Endothelial cell of umbilical vein (primary cell): ENCODE measurements at regions of chr14 and their contacts with region 1.

Region 1: GRCh38 chr14:102316743-102317563 is 2.6 kb upstream of the ZNF839 start:
- DNase-seq: peak; percentile 93
- H3K4me3 ChIP-seq: peak overlapping the region; percentile 9 to 54 (median 31)
- H3K27ac ChIP-seq: no peak overlapping the region
- H3K4me1 ChIP-seq: peaks cover 25% of the 10 kb centered on the region
- H3K27me3 ChIP-seq: no peaks in the 10 kb centered on the region
- CTCF ChIP-seq: peak; percentile 76 to 85
- POLR2A ChIP-seq: peak; percentile 39

Region 2: GRCh38 chr14:101761032-101761880 is 555.7 kb before region 1 on chr14 and contains the start of gene PPP2R5C:
- CTCF ChIA-PET with region 1: no interaction called
- POLR2A ChIA-PET with region 1: no interaction called
- dilution Hi-C with region 1: no loop called
- intact Hi-C with region 1: loop called (anchors 10 kb)
- DNase-seq: peak; percentile 83
- H3K4me3 ChIP-seq: peak within 1 kb of the TSS; percentile 50 to 64 (median 52)
- H3K27ac ChIP-seq: no peak within 1 kb of the TSS
- H3K4me1 ChIP-seq: peaks cover 6% of the 10 kb centered on the region
- H3K27me3 ChIP-seq: peaks cover 13 to 32% of the 10 kb centered on the region in 2 experiments
- CTCF ChIP-seq: no peak
- POLR2A ChIP-seq: no peak
- total RNA-seq, gene PPP2R5C: 83.6 and 89.0 TPM in 2 replicates

Region 3: DNA sequence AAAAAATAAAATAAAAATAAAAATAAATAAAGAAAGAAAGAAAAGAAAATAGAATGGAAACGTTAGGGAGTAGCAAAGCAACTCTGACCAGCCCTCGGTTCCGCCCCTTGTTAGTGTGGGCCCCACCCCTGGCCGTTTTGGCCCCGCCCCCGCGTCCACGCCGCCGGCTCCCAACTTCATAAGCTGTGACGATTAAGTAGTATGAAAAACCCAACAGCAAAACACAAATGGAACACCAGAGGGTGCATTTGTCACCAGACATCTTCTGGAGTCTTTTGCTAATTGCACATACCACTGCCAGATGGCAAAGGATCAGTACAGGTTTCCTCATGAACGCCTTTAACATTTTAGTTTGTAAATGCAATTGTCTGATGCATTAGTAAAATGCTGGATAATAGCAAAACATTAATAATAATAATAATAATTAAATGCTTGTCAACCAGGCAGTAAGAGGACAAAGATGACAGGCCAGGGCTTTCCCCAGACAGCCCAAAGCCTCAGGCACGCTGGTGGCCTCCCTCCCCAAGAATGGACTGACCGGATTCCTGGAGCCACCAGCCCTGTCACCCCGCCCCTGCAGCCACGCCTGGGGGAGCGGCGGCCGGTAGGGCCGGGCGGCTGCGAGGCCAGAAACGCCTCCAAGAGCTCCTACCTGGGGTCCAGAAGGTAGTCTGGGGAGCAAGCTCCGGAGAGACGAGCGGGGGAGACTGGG is 253.7 kb before region 1 on chr14:
- CTCF ChIA-PET with region 1: interaction called, 20 read pairs
- POLR2A ChIA-PET with region 1: no interaction called
- dilution Hi-C with region 1: no loop called
- intact Hi-C with region 1: loop called (anchors 1 kb)
- DNase-seq: peak; percentile 94
- H3K4me3 ChIP-seq: no peak overlapping the region
- H3K27ac ChIP-seq: no peak overlapping the region
- H3K4me1 ChIP-seq: no peaks in the 10 kb centered on the region
- H3K27me3 ChIP-seq: no peaks in the 10 kb centered on the region
- CTCF ChIP-seq: peak; percentile 32 to 53
- POLR2A ChIP-seq: no peak

Region 4: GRCh38 chr14:102096214-102097114 is 220.5 kb before region 1 on chr14:
- CTCF ChIA-PET with region 1: interaction called, 28 read pairs
- POLR2A ChIA-PET with region 1: no interaction called
- dilution Hi-C with region 1: no loop called
- intact Hi-C with region 1: loop called (anchors 1 kb)
- DNase-seq: peak; percentile 79
- H3K4me3 ChIP-seq: no peak overlapping the region
- H3K27ac ChIP-seq: no peak overlapping the region
- H3K4me1 ChIP-seq: no peaks in the 10 kb centered on the region
- H3K27me3 ChIP-seq: no peaks in the 10 kb centered on the region
- CTCF ChIP-seq: peak; percentile 81 to 88
- POLR2A ChIP-seq: no peak

Region 5: GRCh38 chr14:102235275-102235897 is 81.6 kb before region 1 on chr14:
- CTCF ChIA-PET with region 1: interaction called, 32 read pairs
- POLR2A ChIA-PET with region 1: no interaction called
- dilution Hi-C with region 1: no loop called
- intact Hi-C with region 1: loop called (anchors 1 kb)
- DNase-seq: peak; percentile 72
- H3K4me3 ChIP-seq: no peak overlapping the region
- H3K27ac ChIP-seq: no peak overlapping the region
- H3K4me1 ChIP-seq: peaks cover 3% of the 10 kb centered on the region
- H3K27me3 ChIP-seq: no peaks in the 10 kb centered on the region
- CTCF ChIP-seq: peak; percentile 84 to 89
- POLR2A ChIP-seq: no peak

Region 6: DNA sequence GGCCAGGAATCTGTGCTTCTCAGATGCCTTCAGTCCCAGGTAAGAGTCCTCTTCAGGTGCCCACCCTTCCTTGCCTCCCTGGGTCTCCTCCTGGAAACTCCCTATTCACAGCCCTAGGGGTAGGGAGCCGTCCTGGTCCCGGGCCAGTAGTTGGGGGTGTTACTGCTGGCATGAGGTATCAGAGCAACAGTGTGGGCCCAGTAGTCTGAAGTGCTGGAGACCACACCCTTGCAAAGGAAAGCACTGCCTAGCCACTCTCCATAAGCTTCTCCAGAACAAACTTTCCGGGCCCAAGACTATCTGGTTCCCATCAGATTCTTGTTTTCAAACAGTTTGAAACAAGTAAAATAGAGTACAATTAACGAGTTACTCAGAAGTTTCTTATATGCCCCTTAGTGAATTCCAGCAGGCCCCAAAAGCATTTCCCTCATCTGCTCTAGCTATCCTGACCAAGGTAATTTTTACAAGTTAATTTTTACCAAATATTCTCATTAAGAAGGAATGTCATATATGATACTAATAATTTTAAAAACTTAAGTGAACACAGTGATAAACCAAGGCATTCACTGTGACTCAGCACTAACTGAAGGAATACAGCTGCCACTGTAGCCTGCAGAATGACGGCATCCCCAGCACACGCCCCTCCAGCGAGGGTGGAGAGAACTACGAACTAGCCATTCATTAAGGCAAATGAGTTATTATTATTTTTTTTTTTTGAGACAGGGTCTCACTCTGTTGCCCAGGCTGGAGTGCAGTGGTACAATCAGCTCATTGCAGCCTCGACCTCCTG is 61.4 kb before region 1 on chr14:
- CTCF ChIA-PET with region 1: no interaction called
- POLR2A ChIA-PET with region 1: no interaction called
- dilution Hi-C with region 1: no loop called
- intact Hi-C with region 1: no loop called
- DNase-seq: no peak
- H3K4me3 ChIP-seq: no peak overlapping the region
- H3K27ac ChIP-seq: no peak overlapping the region
- H3K4me1 ChIP-seq: no peaks in the 10 kb centered on the region
- H3K27me3 ChIP-seq: no peaks in the 10 kb centered on the region
- CTCF ChIP-seq: no peak
- POLR2A ChIP-seq: no peak

Region 7: GRCh38 chr14:102362545-102363181 is 45.7 kb after region 1 on chr14 and contains the starts of genes CINP and TECPR2:
- CTCF ChIA-PET with region 1: interaction called, 3 read pairs
- POLR2A ChIA-PET with region 1: no interaction called
- dilution Hi-C with region 1: no loop called
- intact Hi-C with region 1: loop called (anchors 1 kb)
- DNase-seq: peak; percentile 95
- H3K4me3 ChIP-seq: peak within 1 kb of the TSS; percentile 71 to 94 (median 94)
- H3K27ac ChIP-seq: peak within 1 kb of the TSS; percentile 78
- H3K4me1 ChIP-seq: peaks cover 17% of the 10 kb centered on the region
- H3K27me3 ChIP-seq: no peaks in the 10 kb centered on the region
- CTCF ChIP-seq: no peak
- POLR2A ChIP-seq: peak; percentile 95
- total RNA-seq, gene CINP: 42.1 and 44.0 TPM in 2 replicates
- total RNA-seq, gene TECPR2: 21.5 TPM in 2 replicates

Region 8: GRCh38 chr14:102424520-102424919 is 107.6 kb after region 1 on chr14:
- CTCF ChIA-PET with region 1: no interaction called
- POLR2A ChIA-PET with region 1: no interaction called
- dilution Hi-C with region 1: no loop called
- intact Hi-C with region 1: no loop called
- DNase-seq: no peak
- H3K4me3 ChIP-seq: no peak overlapping the region
- H3K27ac ChIP-seq: no peak overlapping the region
- H3K4me1 ChIP-seq: no peaks in the 10 kb centered on the region
- H3K27me3 ChIP-seq: no peaks in the 10 kb centered on the region
- CTCF ChIP-seq: no peak
- POLR2A ChIP-seq: no peak